ENCODE measurements at regions of chr17 and their contacts with region 1.

Region 1: GRCh38 chr17:8745586-8746500 is 1.2 kb upstream of the CCDC42 start:
- DNase-seq: peak; percentile 74
- H3K4me3 Mint-ChIP-seq: peak overlapping the region; percentile 81
- H3K27ac Mint-ChIP-seq: peak overlapping the region; percentile 53
- H3K4me1 Mint-ChIP-seq: peaks cover 8% of the 10 kb centered on the region
- H3K27me3 Mint-ChIP-seq: no peaks in the 10 kb centered on the region

Region 2: GRCh38 chr17:8125157-8125946 is 620.5 kb before region 1 on chr17:
- CTCF ChIA-PET with region 1: no interaction called
- intact Hi-C with region 1: loop called (anchors 1 kb)
- DNase-seq: peak; percentile 96
- H3K4me3 Mint-ChIP-seq: peak overlapping the region; percentile 84
- H3K27ac Mint-ChIP-seq: peak overlapping the region; percentile 90
- H3K4me1 Mint-ChIP-seq: peaks cover 43% of the 10 kb centered on the region
- H3K27me3 Mint-ChIP-seq: peaks cover 29% of the 10 kb centered on the region

Region 3: DNA sequence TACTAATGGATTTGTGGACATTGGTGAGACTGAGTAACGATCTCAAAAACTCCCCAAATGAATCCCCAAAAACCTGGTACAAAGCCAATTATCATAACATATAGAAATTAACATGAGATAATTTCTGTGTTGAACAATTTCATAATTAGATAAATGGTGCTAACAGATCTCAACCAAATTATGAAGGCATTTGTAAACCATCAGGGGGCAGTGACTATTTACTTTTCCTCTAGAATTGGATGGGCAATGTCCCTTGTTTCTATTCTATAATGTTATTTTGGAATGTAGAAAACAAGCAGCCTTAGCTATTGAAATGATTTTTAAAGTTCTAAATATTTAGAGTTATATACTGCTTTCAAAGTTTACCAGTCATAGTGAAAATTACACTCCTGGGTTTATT is 173.1 kb before region 1 on chr17:
- CTCF ChIA-PET with region 1: no interaction called
- intact Hi-C with region 1: loop called (anchors 5 kb)
- DNase-seq: no peak
- H3K4me3 Mint-ChIP-seq: no peak overlapping the region
- H3K27ac Mint-ChIP-seq: no peak overlapping the region
- H3K4me1 Mint-ChIP-seq: no peaks in the 10 kb centered on the region
- H3K27me3 Mint-ChIP-seq: no peaks in the 10 kb centered on the region

Region 4: GRCh38 chr17:8606401-8606800 is 139.4 kb before region 1 on chr17:
- CTCF ChIA-PET with region 1: no interaction called
- intact Hi-C with region 1: no loop called
- DNase-seq: no peak
- H3K4me3 Mint-ChIP-seq: no peak overlapping the region
- H3K27ac Mint-ChIP-seq: no peak overlapping the region
- H3K4me1 Mint-ChIP-seq: no peaks in the 10 kb centered on the region
- H3K27me3 Mint-ChIP-seq: no peaks in the 10 kb centered on the region

Region 5: DNA sequence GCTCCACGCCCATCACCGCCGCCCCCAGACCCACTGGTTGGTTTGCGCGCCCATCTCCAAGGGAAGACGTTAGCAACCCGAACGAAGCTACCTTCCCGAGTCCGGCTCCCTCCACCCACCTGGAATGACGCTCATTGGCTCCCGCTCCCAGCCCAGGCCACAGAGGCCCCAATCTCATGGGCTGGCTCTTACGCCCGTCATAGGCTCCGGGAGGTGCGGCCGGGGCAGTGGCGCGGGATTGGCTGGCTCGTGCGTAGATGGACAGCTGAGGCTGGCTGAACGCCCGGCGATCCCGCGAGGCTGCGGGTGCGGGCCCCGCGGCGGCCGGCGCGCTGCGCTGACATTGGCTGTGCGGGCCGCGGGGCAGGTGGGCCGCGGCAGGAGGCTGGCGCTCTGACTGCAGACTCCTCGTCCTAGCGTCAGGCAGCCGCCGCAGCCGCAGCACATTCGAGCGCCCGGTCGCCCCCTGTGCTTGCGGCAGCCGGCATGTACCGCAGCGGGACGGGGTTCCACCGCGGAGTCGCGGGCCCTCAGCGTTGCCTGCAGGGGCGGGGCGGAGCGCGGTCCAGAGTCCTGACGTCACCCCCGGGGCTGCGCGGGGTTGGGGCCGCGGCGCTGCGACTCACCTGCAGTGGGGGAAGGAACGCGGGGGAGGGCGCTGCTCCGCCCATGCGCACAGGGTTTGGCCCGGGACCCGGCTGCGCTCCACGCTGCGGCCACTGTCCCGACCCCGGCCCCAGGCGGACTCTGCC is 114.9 kb before region 1 on chr17:
- CTCF ChIA-PET with region 1: no interaction called
- intact Hi-C with region 1: loop called (anchors 1 kb)
- DNase-seq: peak; percentile 97
- H3K4me3 Mint-ChIP-seq: peak overlapping the region; percentile 94
- H3K27ac Mint-ChIP-seq: no peak overlapping the region
- H3K4me1 Mint-ChIP-seq: peaks cover 4% of the 10 kb centered on the region
- H3K27me3 Mint-ChIP-seq: peaks cover 40% of the 10 kb centered on the region

Region 6: DNA sequence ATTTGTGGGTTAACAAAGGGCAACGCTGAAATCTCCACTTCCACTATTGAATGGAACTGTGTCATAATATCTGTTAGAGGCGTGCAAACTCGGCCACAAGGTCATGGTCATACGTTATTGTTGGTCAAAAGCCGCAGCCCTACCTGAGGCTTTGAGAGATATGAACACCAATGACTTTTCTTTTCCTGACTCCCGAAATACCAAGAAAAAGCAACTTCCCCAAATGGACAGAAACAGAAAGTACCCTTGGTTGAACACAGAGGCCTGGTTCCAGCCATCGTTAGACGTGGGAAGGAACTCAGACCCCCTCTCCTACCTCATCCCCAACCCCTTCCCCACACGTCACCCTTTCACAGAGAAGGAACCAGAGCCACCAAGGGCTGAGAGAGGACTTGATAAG is 221.1 kb after region 1 on chr17:
- CTCF ChIA-PET with region 1: no interaction called
- intact Hi-C with region 1: no loop called
- DNase-seq: no peak
- H3K4me3 Mint-ChIP-seq: peak overlapping the region; percentile 95
- H3K27ac Mint-ChIP-seq: no peak overlapping the region
- H3K4me1 Mint-ChIP-seq: peaks cover 35% of the 10 kb centered on the region
- H3K27me3 Mint-ChIP-seq: no peaks in the 10 kb centered on the region

Region 7: DNA sequence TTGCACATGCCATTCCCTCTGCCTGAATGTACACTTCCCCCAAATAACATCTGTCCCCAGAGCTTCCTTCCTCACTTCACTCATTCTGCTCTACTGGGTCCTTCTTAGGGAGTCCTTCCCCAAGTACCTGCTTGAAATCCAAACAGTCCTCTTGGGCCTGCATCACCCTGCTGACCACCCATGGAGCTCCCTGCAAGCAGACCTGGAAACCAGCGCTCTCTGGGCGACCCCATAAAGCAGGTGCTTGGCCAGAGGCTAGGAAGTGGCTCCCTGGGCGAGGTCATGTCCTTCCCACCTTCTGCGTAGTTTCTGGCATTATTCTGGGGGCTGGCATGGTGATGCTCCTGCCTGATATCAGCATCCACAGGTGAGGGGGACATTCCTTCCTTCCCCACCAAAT is 263.3 kb after region 1 on chr17:
- CTCF ChIA-PET with region 1: no interaction called
- intact Hi-C with region 1: no loop called
- DNase-seq: no peak
- H3K4me3 Mint-ChIP-seq: no peak overlapping the region
- H3K27ac Mint-ChIP-seq: no peak overlapping the region
- H3K4me1 Mint-ChIP-seq: peaks cover 2% of the 10 kb centered on the region
- H3K27me3 Mint-ChIP-seq: peaks cover 51% of the 10 kb centered on the region

Measured in activated naive CD4-positive, alpha-beta T cell treated with anti-CD3 and anti-CD28 coated beads for 36 hours (primary cell).